ENCODE measurements at regions of chr19 and their contacts with region 1.

Region 1: GRCh38 chr19:10194500-10195289 is at the start of gene DNMT1:
- DNase-seq: peak; percentile 97 to 98
- H3K4me3 ChIP-seq: peak within 1 kb of the TSS; percentile 91
- H3K4me3 Mint-ChIP-seq: peak within 1 kb of the TSS; percentile 96
- H3K27ac Mint-ChIP-seq: peak within 1 kb of the TSS; percentile 88
- H3K4me1 ChIP-seq: no peaks in the 10 kb centered on the region
- H3K4me1 Mint-ChIP-seq: no peaks in the 10 kb centered on the region
- H3K27me3 ChIP-seq: no peaks in the 10 kb centered on the region
- H3K27me3 Mint-ChIP-seq: no peaks in the 10 kb centered on the region
- CTCF ChIP-seq: no peak
- total RNA-seq, gene DNMT1: 144 and 171 TPM in 2 replicates

Region 2: DNA sequence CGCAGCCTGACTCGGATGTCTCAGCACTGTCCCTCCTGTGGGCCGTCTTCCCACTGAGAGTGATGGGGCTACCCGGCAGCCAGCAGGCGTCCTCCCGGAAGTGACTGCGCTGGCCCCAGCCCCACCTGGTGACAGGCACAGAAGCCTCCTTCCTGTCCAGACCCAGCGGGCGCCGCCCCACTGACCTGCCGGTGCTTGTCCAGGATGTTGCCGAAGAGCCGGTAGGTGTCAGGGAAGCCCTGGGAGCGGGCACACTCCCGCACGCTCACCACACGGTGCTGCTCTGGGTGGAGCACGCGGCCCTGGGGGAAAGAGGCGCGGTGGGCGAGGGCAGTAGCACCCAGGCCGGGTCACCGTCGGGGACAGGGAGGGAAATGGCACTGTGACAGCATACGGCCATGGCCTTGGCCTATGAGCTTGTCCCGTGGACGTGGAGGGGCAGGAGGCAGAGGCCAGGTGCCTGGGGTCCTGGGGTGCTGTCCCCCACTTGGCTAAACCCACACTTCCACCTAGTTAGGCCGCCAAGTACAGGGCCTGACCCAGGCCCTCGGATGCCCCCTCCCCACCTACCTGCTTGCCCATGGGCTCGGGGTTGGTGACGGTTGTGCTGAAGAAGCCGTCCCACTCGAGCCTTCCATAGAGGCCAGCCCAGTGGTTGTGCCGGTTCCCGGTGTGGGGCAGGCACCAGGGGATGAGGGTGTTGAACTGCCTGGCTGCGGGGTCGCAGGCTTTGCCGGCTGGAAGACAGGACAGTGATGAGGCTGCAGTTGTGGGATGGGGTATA is 59.0 kb before region 1 on chr19:
- CTCF ChIA-PET with region 1: no interaction called
- POLR2A ChIA-PET with region 1: no interaction called
- intact Hi-C with region 1: no loop called
- DNase-seq: no peak
- H3K4me3 ChIP-seq: no peak overlapping the region
- H3K4me3 Mint-ChIP-seq: no peak overlapping the region
- H3K27ac Mint-ChIP-seq: no peak overlapping the region
- H3K4me1 ChIP-seq: no peaks in the 10 kb centered on the region
- H3K4me1 Mint-ChIP-seq: no peaks in the 10 kb centered on the region
- H3K27me3 ChIP-seq: no peaks in the 10 kb centered on the region
- H3K27me3 Mint-ChIP-seq: no peaks in the 10 kb centered on the region
- CTCF ChIP-seq: no peak

Region 3: DNA sequence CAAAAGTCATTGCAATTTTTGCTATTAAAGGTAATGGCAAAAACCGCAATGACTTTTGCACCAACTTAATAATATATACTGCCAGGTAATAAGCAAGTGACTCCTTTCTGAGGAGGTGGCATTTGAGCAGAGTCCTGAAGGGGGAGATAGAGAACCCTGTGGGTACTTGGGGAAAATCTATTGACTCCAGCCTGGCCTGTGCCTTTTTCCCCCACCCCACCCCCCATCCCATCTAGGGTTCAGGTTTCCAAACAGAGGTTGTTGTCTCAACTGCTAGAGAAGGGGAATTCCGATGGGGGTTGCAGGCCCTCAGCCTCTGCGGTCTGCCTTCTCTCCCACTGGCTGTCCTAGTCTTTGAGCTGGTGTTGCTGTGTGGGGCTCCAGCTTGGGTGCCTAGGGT is 25.0 kb after region 1 on chr19:
- CTCF ChIA-PET with region 1: no interaction called
- POLR2A ChIA-PET with region 1: no interaction called
- intact Hi-C with region 1: no loop called
- DNase-seq: peak; percentile 31 to 44
- H3K4me3 ChIP-seq: no peak overlapping the region
- H3K4me3 Mint-ChIP-seq: no peak overlapping the region
- H3K27ac Mint-ChIP-seq: no peak overlapping the region
- H3K4me1 ChIP-seq: no peaks in the 10 kb centered on the region
- H3K4me1 Mint-ChIP-seq: no peaks in the 10 kb centered on the region
- H3K27me3 ChIP-seq: no peaks in the 10 kb centered on the region
- H3K27me3 Mint-ChIP-seq: no peaks in the 10 kb centered on the region
- CTCF ChIP-seq: peak in 1 of 2 experiments; percentile 37

Region 4: GRCh38 chr19:10230861-10231611 is 36.3 kb after region 1 on chr19 and contains the start of gene S1PR2:
- CTCF ChIA-PET with region 1: interaction called, 4 read pairs
- POLR2A ChIA-PET with region 1: no interaction called
- intact Hi-C with region 1: loop called (anchors 5 kb)
- DNase-seq: peak; percentile 85 to 86
- H3K4me3 ChIP-seq: peak within 1 kb of the TSS; percentile 83
- H3K4me3 Mint-ChIP-seq: peak within 1 kb of the TSS; percentile 72
- H3K27ac Mint-ChIP-seq: peak within 1 kb of the TSS; percentile 59
- H3K4me1 ChIP-seq: 0 out of 2 replicates have a peak, but pooled peaks cover 6% of the 10 kb centered on the region
- H3K4me1 Mint-ChIP-seq: no peaks in the 10 kb centered on the region
- H3K27me3 ChIP-seq: no peaks in the 10 kb centered on the region
- H3K27me3 Mint-ChIP-seq: no peaks in the 10 kb centered on the region
- CTCF ChIP-seq: no peak
- total RNA-seq, gene S1PR2: 6.2 and 7.2 TPM in 2 replicates

Region 5: GRCh38 chr19:10260141-10260584 is 65.5 kb after region 1 on chr19:
- CTCF ChIA-PET with region 1: no interaction called
- POLR2A ChIA-PET with region 1: no interaction called
- intact Hi-C with region 1: no loop called
- DNase-seq: no peak
- H3K4me3 ChIP-seq: no peak overlapping the region
- H3K4me3 Mint-ChIP-seq: no peak overlapping the region
- H3K27ac Mint-ChIP-seq: peak overlapping the region; percentile 79
- H3K4me1 ChIP-seq: peaks cover 27% of the 10 kb centered on the region
- H3K4me1 Mint-ChIP-seq: peaks cover 7% of the 10 kb centered on the region
- H3K27me3 ChIP-seq: no peaks in the 10 kb centered on the region
- H3K27me3 Mint-ChIP-seq: no peaks in the 10 kb centered on the region
- CTCF ChIP-seq: no peak